Mammary epithelial cell (primary cell): ENCODE measurements at regions of chr4 and their contacts with region 1.

Region 1: GRCh38 chr4:93228021-93228420 is 600.5 kb upstream of the ATOH1 start:
- DNase-seq: no peak
- H3K4me3 ChIP-seq: no peak overlapping the region
- H3K27ac ChIP-seq: no peak overlapping the region
- H3K4me1 ChIP-seq: no peaks in the 10 kb centered on the region
- H3K27me3 ChIP-seq: peaks cover 8% of the 10 kb centered on the region
- CTCF ChIP-seq: no peak

Region 2: GRCh38 chr4:92488496-92488895 is 739.5 kb before region 1 on chr4:
- CTCF ChIA-PET with region 1: no interaction called
- dilution Hi-C with region 1: no loop called
- in situ Hi-C with region 1: no loop called
- intact Hi-C with region 1: no loop called
- DNase-seq: no peak
- H3K4me3 ChIP-seq: no peak overlapping the region
- H3K27ac ChIP-seq: no peak overlapping the region
- H3K4me1 ChIP-seq: no peaks in the 10 kb centered on the region
- H3K27me3 ChIP-seq: no peaks in the 10 kb centered on the region
- CTCF ChIP-seq: no peak

Region 3: GRCh38 chr4:93084599-93085305 is 143.3 kb before region 1 on chr4:
- CTCF ChIA-PET with region 1: no interaction called
- dilution Hi-C with region 1: no loop called
- in situ Hi-C with region 1: no loop called
- intact Hi-C with region 1: no loop called
- DNase-seq: no peak
- H3K4me3 ChIP-seq: no peak overlapping the region
- H3K27ac ChIP-seq: no peak overlapping the region
- H3K4me1 ChIP-seq: no peaks in the 10 kb centered on the region
- H3K27me3 ChIP-seq: no peaks in the 10 kb centered on the region
- CTCF ChIP-seq: no peak

Region 4: DNA sequence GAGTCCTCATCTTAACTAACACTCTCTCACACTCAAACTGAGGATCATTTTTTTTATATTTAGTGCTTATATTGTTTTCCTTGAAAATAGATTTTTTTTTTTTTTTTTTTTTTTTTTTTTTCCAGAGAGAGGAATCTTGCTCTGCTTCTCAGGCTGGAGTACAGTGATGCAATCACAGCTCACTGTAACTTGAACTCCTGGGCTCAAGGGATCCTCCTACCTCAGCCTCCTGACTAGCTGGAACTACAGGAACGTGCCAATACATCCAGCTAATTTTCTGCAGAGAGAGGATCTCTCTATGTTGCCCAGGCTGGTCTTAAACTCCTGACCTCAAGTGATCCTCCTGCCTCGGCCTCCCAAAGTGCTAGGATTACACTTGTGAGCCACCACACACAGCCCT is 49.7 kb before region 1 on chr4:
- CTCF ChIA-PET with region 1: no interaction called
- dilution Hi-C with region 1: no loop called
- in situ Hi-C with region 1: no loop called
- intact Hi-C with region 1: loop called (anchors 2 kb)
- DNase-seq: no peak
- H3K4me3 ChIP-seq: no peak overlapping the region
- H3K27ac ChIP-seq: no peak overlapping the region
- H3K4me1 ChIP-seq: peaks cover 2% of the 10 kb centered on the region
- H3K27me3 ChIP-seq: no peaks in the 10 kb centered on the region
- CTCF ChIP-seq: no peak

Region 5: DNA sequence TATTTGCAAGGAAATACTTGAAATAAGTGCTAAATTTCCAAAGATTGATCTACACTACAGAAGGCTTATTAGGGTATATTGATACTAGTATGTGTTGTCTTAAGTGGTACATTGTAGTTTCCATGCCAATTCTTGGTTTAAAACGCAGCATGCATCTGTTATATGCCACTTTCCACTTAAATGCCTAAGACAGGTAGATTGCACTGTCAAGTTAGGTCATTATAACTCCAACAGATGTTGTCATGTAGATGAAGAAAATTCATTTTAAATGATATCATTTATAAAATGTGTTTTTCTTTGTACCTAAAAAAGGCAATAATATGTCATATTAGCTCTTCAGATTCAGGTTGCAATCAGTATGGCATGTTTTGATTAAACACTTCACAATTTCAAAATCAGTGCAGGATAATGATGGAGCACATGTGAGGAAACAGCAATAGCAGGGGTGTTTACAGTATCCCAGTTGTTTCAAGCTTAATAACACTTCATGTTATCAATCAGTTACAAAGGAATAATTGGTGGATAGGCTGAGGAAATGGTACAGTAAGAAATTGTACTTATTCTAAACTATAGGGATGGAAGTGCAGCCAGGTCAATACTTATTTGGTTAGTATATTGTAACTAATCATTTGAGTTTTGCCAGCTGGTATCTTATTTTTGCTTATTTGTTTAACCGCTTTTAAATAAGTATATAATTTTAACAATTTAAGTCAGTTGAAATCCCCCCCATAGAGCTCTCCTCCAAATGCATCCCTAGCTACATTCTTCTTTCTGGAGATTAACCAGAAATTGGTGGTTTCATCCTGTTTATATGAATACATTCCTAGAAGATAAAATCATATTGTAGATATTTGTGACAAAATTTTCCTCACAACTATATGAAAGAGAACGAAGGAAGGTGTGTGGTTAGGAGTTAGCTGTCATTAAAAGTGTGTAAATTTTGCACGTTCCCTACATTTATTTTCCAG is 146.2 kb after region 1 on chr4:
- CTCF ChIA-PET with region 1: no interaction called
- dilution Hi-C with region 1: no loop called
- in situ Hi-C with region 1: no loop called
- intact Hi-C with region 1: no loop called
- DNase-seq: no peak
- H3K4me3 ChIP-seq: no peak overlapping the region
- H3K27ac ChIP-seq: no peak overlapping the region
- H3K4me1 ChIP-seq: no peaks in the 10 kb centered on the region
- H3K27me3 ChIP-seq: peaks cover 2% of the 10 kb centered on the region
- CTCF ChIP-seq: no peak